GM12878 (cell line): ENCODE measurements at regions of chr11 and their contacts with region 1.

Region 1: DNA sequence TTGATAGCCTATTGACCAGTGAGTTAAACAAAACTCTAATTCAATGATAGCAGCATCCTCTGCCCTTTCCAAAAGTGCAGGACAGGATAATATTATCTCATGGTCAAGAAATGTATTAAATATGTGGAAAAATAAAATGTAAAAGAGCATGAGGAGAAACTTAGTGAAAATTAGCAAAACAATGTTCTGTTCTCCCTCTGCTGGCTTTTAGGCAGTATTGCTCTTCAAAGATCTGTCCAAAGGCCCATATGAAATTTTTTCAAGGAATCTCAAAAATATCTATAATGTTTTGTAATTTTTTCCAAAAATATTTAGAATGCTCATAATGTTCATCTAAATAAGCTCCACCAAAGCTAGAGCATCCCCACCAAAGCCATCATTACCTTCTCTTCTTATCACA is 8.3 kb upstream of the ARL14EP start:
- DNase-seq: no peak
- ATAC-seq: no peak
- H3K4me3 ChIP-seq: no peak overlapping the region
- H3K27ac ChIP-seq: no peak overlapping the region
- H3K4me1 ChIP-seq: peaks cover 17% of the 10 kb centered on the region
- H3K27me3 ChIP-seq: no peaks in the 10 kb centered on the region
- CTCF ChIP-seq: peak; percentile 39 to 55 (median 47); a peak in 5 of 6 replicates
- EP300 ChIP-seq: no peak
- POLR2A ChIP-seq: no peak
- RAD21 ChIP-seq: peak; percentile 58

Region 2: DNA sequence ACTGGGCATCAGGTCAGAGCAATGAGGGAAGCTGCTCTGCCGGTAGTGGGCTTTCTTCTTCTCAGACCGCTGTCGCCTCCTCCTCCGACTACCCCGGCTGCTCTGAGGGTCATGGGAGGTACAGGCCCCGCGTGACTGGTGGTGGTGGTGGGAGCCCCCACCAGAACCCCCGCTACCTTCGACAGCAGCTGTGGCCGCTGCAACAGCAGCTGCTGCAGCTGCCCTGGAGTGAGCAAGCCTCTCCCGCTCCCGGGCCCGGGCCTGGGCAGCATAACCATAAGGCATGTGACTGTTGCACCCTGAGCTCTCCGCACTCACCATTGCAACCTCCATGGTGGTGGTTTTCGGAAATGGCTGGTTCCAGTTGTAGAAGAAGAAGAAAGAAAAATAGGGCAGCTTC is 302.3 kb before region 1 on chr11:
- CTCF ChIA-PET with region 1: no interaction called
- POLR2A ChIA-PET with region 1: no interaction called
- RAD21 ChIA-PET with region 1: no interaction called
- SMC1A ChIA-PET with region 1: no interaction called
- in situ Hi-C with region 1: no loop called
- intact Hi-C with region 1: no loop called
- DNase-seq: no peak
- ATAC-seq: no peak
- H3K4me3 ChIP-seq: no peak overlapping the region
- H3K27ac ChIP-seq: no peak overlapping the region
- H3K4me1 ChIP-seq: no peaks in the 10 kb centered on the region
- H3K27me3 ChIP-seq: no peaks in the 10 kb centered on the region; a peak in 1 of 4 replicates
- CTCF ChIP-seq: no peak
- EP300 ChIP-seq: no peak
- POLR2A ChIP-seq: no peak
- RAD21 ChIP-seq: no peak

Region 3: DNA sequence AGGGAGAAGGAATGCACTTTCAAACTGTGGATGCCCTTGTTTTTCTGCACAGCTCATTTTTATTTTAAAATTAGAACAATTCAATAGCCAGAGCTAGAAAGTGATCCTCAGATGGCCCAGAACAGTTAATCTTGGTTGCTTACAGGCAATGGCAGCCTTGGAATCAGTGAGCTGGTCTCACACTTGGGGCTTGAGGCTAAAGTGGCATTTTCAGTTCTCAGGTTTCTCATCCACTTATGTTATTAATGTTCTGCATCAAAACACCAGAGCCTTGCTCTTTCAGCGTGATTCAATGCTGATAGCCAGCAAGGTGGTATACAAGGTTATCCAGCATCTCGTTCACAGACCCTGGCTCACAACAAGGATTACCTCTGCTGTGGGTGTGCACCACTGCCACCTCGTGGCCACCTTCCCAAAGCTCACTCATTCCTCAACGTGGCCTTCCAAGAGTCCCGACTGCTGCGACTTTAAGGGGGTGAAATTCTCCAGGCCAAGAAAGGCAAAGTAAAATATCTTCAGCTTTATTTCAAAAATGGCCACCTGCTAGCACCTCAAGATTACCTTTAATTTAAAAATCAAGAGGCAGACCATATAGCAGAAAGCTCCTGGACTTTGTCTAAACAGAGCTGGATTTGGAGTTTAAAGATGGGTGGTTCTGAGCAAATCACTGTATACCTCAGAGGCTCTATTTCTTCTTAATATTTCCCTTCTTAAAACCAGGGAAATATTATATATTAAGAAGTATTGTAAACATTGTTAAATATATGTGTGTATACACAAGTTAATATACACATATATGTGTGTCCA is 118.0 kb before region 1 on chr11:
- CTCF ChIA-PET with region 1: interaction called, 29 read pairs
- POLR2A ChIA-PET with region 1: no interaction called
- RAD21 ChIA-PET with region 1: interaction called, 10 read pairs
- SMC1A ChIA-PET with region 1: interaction called, 15 read pairs
- in situ Hi-C with region 1: no loop called
- intact Hi-C with region 1: loop called (anchors 2 kb)
- DNase-seq: no peak
- ATAC-seq: peak; percentile 98
- H3K4me3 ChIP-seq: no peak overlapping the region
- H3K27ac ChIP-seq: no peak overlapping the region
- H3K4me1 ChIP-seq: no peaks in the 10 kb centered on the region
- H3K27me3 ChIP-seq: no peaks in the 10 kb centered on the region; a peak in 1 of 4 replicates
- CTCF ChIP-seq: peak; percentile 76 to 88 (median 85)
- EP300 ChIP-seq: no peak
- POLR2A ChIP-seq: no peak
- RAD21 ChIP-seq: peak; percentile 73

Region 4: GRCh38 chr11:30206249-30206996 is 108.2 kb before region 1 on chr11:
- CTCF ChIA-PET with region 1: interaction called, 4 read pairs
- POLR2A ChIA-PET with region 1: no interaction called
- RAD21 ChIA-PET with region 1: no interaction called
- SMC1A ChIA-PET with region 1: interaction called, 5 read pairs
- in situ Hi-C with region 1: no loop called
- intact Hi-C with region 1: loop called (anchors 2 kb)
- DNase-seq: peak; percentile 49
- ATAC-seq: peak; percentile 93
- H3K4me3 ChIP-seq: peak overlapping the region; percentile 6; the same call in 1 of the 2 replicates
- H3K27ac ChIP-seq: peak overlapping the region; percentile 45
- H3K4me1 ChIP-seq: peaks cover 11% of the 10 kb centered on the region; the same call in 1 of the 2 replicates
- H3K27me3 ChIP-seq: no peaks in the 10 kb centered on the region
- CTCF ChIP-seq: no peak
- EP300 ChIP-seq: no peak
- POLR2A ChIP-seq: no peak
- RAD21 ChIP-seq: peak; percentile 7; the same call in 1 of the 2 replicates

Region 5: GRCh38 chr11:30244265-30244664 is 70.4 kb before region 1 on chr11:
- CTCF ChIA-PET with region 1: interaction called, 7 read pairs
- POLR2A ChIA-PET with region 1: no interaction called
- RAD21 ChIA-PET with region 1: interaction called, 5 read pairs
- SMC1A ChIA-PET with region 1: interaction called, 12 read pairs
- in situ Hi-C with region 1: no loop called
- intact Hi-C with region 1: no loop called
- DNase-seq: no peak
- ATAC-seq: no peak
- H3K4me3 ChIP-seq: no peak overlapping the region
- H3K27ac ChIP-seq: no peak overlapping the region
- H3K4me1 ChIP-seq: no peaks in the 10 kb centered on the region
- H3K27me3 ChIP-seq: 0 out of 4 replicates have a peak, but pooled peaks cover 0 to 1% of the 10 kb centered on the region in 2 experiments
- CTCF ChIP-seq: no peak
- EP300 ChIP-seq: no peak
- POLR2A ChIP-seq: no peak
- RAD21 ChIP-seq: no peak

Region 6: DNA sequence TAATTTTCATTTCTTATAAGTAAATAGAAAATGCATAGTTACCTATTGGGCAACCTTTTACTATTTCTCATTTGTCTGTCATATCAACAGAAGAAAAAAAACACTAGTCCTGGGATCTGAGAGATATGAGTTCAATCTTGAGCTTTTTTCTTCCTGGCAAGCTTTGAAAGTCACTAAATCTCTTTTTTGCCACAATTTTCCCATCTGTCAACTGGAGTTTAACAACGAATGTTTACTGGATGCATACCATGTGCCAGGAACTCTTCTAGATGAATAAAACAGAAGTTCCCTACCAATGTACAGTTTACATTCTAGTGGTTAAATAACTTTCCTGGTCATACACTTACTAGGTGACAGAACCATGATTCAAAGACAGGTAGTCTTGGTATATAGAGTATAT is 52.8 kb before region 1 on chr11:
- CTCF ChIA-PET with region 1: no interaction called
- POLR2A ChIA-PET with region 1: no interaction called
- RAD21 ChIA-PET with region 1: no interaction called
- SMC1A ChIA-PET with region 1: interaction called, 3 read pairs
- in situ Hi-C with region 1: no loop called
- intact Hi-C with region 1: loop called (anchors 2 kb)
- DNase-seq: no peak
- ATAC-seq: no peak
- H3K4me3 ChIP-seq: no peak overlapping the region
- H3K27ac ChIP-seq: no peak overlapping the region
- H3K4me1 ChIP-seq: no peaks in the 10 kb centered on the region
- H3K27me3 ChIP-seq: no peaks in the 10 kb centered on the region
- CTCF ChIP-seq: no peak
- EP300 ChIP-seq: no peak
- POLR2A ChIP-seq: no peak
- RAD21 ChIP-seq: no peak

Region 7: GRCh38 chr11:30285416-30286121 is 29.1 kb before region 1 on chr11:
- CTCF ChIA-PET with region 1: interaction called, 4 read pairs
- POLR2A ChIA-PET with region 1: no interaction called
- RAD21 ChIA-PET with region 1: no interaction called
- SMC1A ChIA-PET with region 1: interaction called, 12 read pairs
- in situ Hi-C with region 1: no loop called
- intact Hi-C with region 1: no loop called
- DNase-seq: no peak
- ATAC-seq: no peak
- H3K4me3 ChIP-seq: no peak overlapping the region
- H3K27ac ChIP-seq: no peak overlapping the region
- H3K4me1 ChIP-seq: peaks cover 7% of the 10 kb centered on the region
- H3K27me3 ChIP-seq: no peaks in the 10 kb centered on the region
- CTCF ChIP-seq: no peak
- EP300 ChIP-seq: no peak
- POLR2A ChIP-seq: no peak
- RAD21 ChIP-seq: no peak

Region 8: GRCh38 chr11:30333405-30333804 is 18.8 kb after region 1 on chr11:
- CTCF ChIA-PET with region 1: interaction called, 71 read pairs
- POLR2A ChIA-PET with region 1: no interaction called
- RAD21 ChIA-PET with region 1: interaction called, 6 read pairs
- SMC1A ChIA-PET with region 1: interaction called, 71 read pairs
- in situ Hi-C with region 1: no loop called
- intact Hi-C with region 1: no loop called
- DNase-seq: no peak
- ATAC-seq: peak; percentile 82
- H3K4me3 ChIP-seq: no peak overlapping the region
- H3K27ac ChIP-seq: no peak overlapping the region
- H3K4me1 ChIP-seq: no peaks in the 10 kb centered on the region
- H3K27me3 ChIP-seq: no peaks in the 10 kb centered on the region
- CTCF ChIP-seq: peak; percentile 48 to 55 (median 49); a peak in 5 of 6 replicates
- EP300 ChIP-seq: no peak
- POLR2A ChIP-seq: no peak
- RAD21 ChIP-seq: peak; percentile 56

Region 9: GRCh38 chr11:30710221-30710620 is 395.6 kb after region 1 on chr11:
- CTCF ChIA-PET with region 1: no interaction called
- POLR2A ChIA-PET with region 1: no interaction called
- RAD21 ChIA-PET with region 1: no interaction called
- SMC1A ChIA-PET with region 1: no interaction called
- in situ Hi-C with region 1: no loop called
- intact Hi-C with region 1: no loop called
- DNase-seq: no peak
- ATAC-seq: no peak
- H3K4me3 ChIP-seq: no peak overlapping the region
- H3K27ac ChIP-seq: no peak overlapping the region
- H3K4me1 ChIP-seq: no peaks in the 10 kb centered on the region
- H3K27me3 ChIP-seq: no peaks in the 10 kb centered on the region
- CTCF ChIP-seq: no peak
- EP300 ChIP-seq: no peak
- POLR2A ChIP-seq: no peak
- RAD21 ChIP-seq: no peak